GM23248 (cell line): ENCODE measurements at regions of chr5 and their contacts with region 1.

Region 1: GRCh38 chr5:59810041-59810440 is 83.5 kb downstream of the PDE4D start:
- DNase-seq: peak; percentile 77
- H3K4me3 ChIP-seq: peak overlapping the region; percentile 54; the same call in 1 of the 2 replicates
- H3K27ac ChIP-seq: no peak overlapping the region
- H3K4me1 ChIP-seq: no peaks in the 10 kb centered on the region
- H3K27me3 ChIP-seq: peaks cover 38% of the 10 kb centered on the region

Region 2: GRCh38 chr5:59673438-59674058 is 136.5 kb before region 1 on chr5:
- in situ Hi-C with region 1: no loop called
- DNase-seq: peak; percentile 69
- H3K4me3 ChIP-seq: no peak overlapping the region
- H3K27ac ChIP-seq: no peak overlapping the region
- H3K4me1 ChIP-seq: no peaks in the 10 kb centered on the region
- H3K27me3 ChIP-seq: no peaks in the 10 kb centered on the region

Region 3: DNA sequence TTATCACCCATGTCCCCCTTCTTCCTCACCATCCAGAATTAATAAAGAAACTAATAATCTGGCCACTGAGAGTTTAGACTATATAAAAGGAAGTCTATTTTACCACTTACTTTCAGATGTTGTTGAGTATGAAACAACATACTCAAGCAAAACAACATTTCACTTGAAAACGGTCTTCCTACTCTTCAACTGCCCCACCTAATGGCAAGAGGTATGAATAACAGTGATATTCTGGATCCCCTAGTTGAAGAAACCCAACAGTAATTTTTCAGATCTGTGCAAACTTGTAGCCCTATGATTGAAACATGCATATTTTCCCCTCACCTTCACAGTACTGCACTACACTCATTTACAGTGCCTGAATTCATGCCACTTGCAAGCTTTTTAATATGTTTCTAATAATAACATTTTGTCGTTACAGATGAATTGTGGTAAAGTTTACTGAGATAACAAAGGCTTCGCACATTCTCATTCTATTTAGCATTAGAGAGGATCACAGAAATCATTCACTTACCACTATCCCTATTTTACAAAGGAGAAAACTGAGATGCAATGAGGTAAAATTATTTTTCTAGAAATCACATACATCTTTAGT is 351.4 kb after region 1 on chr5:
- in situ Hi-C with region 1: loop called (anchors 10 kb)
- DNase-seq: peak; percentile 55
- H3K4me3 ChIP-seq: no peak overlapping the region
- H3K27ac ChIP-seq: no peak overlapping the region
- H3K4me1 ChIP-seq: no peaks in the 10 kb centered on the region
- H3K27me3 ChIP-seq: no peaks in the 10 kb centered on the region

Region 4: GRCh38 chr5:60382716-60383115 is 572.7 kb after region 1 on chr5:
- in situ Hi-C with region 1: loop called (anchors 25 kb)
- DNase-seq: peak; percentile 55
- H3K4me3 ChIP-seq: no peak overlapping the region
- H3K27ac ChIP-seq: no peak overlapping the region
- H3K4me1 ChIP-seq: no peaks in the 10 kb centered on the region
- H3K27me3 ChIP-seq: peaks cover 11% of the 10 kb centered on the region; the same call in 1 of the 2 replicates

Region 5: DNA sequence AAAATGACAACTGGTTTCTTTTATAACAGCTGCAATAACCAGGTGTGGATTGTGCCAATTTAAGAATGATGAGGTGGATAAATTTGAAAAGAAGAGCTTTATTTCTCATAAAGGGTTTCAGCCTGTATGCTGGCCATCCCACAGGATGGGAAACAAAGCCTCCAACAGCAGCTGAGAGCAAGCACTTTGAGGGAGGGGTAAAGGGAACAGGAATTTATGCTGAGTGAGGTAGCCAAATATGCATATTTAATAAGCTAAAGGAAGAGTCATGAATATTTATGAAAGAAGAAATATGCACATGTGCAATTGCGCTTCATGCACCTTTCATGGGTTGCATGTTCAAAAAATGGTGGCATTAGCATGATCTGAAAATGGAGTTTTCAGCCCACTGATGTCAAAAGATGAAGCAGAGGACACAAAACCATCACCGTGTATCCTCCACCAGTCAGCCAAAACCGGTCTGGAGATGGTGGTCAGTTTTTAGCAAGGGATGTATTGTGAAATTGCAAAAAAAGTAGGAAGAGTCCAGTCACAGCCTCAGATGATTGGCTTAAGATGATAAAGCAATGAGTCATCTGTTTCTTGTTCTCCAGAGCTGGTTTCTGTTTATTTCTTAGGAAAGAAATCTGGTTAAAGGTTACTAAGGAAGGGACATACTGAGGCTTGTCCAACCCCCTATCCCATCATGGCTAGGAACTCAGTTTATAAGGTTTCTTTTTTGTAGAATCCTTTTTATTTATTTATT is 842.0 kb after region 1 on chr5:
- in situ Hi-C with region 1: loop called (anchors 10 kb)
- DNase-seq: peak; percentile 94
- H3K4me3 ChIP-seq: 0 out of 2 replicates have a peak overlapping the region, but pooled peaks have one; percentile 1
- H3K27ac ChIP-seq: peak overlapping the region; percentile 39
- H3K4me1 ChIP-seq: peaks cover 6% of the 10 kb centered on the region
- H3K27me3 ChIP-seq: no peaks in the 10 kb centered on the region